ENCODE measurements at regions of chr3 and their contacts with region 1.

Region 1: DNA sequence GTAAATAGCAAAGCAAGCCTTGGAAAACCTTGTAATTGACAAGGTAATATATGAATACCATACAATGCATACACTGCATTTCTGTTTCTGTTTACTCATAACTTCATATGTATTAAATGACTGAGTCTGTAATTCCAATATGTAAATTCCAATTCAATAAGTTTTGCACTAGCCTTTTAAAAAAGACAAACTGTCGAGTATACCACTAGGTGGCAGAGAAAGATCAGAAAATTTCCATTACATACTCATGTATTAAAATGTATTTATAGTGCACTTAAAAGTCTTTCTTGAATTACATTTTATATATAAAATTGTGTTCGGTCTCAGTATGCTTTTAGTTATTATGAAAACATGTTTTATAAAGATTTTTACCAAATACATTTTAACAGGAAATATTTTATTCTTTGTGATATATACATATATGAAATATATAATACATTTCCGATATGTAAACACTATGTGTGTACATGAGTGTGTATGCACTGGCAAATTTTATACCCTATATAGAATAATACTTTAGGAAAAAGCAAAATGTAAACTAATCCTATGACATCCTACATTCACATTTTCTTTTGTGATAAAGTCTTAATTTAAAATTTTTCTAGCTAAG is 216.8 kb downstream of the VGLL3 start:
- DNase-seq: no peak
- H3K4me3 ChIP-seq: no peak overlapping the region
- H3K27ac ChIP-seq: no peak overlapping the region
- H3K4me1 ChIP-seq: no peaks in the 10 kb centered on the region
- H3K27me3 ChIP-seq: no peaks in the 10 kb centered on the region
- CTCF ChIP-seq: peak in 5 of 6 experiments; percentile 22 to 52 (median 40)
- POLR2A ChIP-seq: no peak

Region 2: DNA sequence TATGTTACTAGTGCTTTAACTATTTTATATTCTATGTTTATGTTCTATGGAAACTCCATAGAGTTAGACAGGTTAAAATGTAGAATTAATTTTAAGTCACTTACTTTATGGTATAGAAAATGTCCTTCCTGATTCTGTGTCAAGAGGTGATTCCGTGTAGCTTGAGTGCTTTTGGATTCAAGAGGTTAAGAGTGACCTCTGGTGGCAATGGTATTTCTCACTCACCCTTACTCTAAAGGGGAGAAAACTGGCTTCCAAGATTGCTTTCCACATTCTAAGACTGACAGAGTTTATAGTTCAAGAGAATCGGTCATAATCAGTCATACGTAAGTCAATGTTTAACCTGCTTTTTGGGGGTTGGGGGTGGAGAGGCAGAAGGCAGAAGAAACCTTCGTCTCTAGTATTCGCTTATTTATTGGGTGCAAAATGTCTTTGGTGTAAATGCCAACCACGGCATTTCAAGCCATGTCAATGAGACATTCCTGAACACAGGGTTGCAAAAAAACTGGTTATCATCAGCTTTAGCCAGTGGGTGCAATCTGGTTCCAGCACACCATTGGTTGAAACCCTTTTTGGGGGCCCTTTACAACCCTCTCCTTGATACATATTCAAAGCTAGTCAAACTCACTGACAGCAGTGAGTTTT is 308.7 kb after region 1 on chr3:
- intact Hi-C with region 1: loop called (anchors 10 kb)
- DNase-seq: no peak
- H3K4me3 ChIP-seq: no peak overlapping the region
- H3K27ac ChIP-seq: no peak overlapping the region
- H3K4me1 ChIP-seq: no peaks in the 10 kb centered on the region
- H3K27me3 ChIP-seq: no peaks in the 10 kb centered on the region
- CTCF ChIP-seq: peak in 5 of 6 experiments; percentile 25 to 52 (median 41)
- POLR2A ChIP-seq: no peak